K562 (cell line): ENCODE measurements at regions of chr16 and their contacts with region 1.

Region 1: GRCh38 chr16:4882633-4883285 is 35.5 kb downstream of the UBN1 start:
- DNase-seq: peak in 1 of 4 experiments; percentile 53
- ATAC-seq: peak; percentile 46
- H3K4me3 ChIP-seq: no peak overlapping the region
- H3K27ac ChIP-seq: no peak overlapping the region
- H3K4me1 ChIP-seq: peaks cover 25 to 38% of the 10 kb centered on the region in 2 experiments; a peak in 4 of 5 replicates
- H3K27me3 ChIP-seq: no peaks in the 10 kb centered on the region
- CTCF ChIP-seq: no peak
- EP300 ChIP-seq: no peak
- POLR2A ChIP-seq: no peak
- RAD21 ChIP-seq: no peak

Region 2: GRCh38 chr16:4894276-4895150 is 11.8 kb after region 1 on chr16:
- CTCF ChIA-PET with region 1: no interaction called
- POLR2A ChIA-PET with region 1: interaction called, 19 read pairs
- in situ Hi-C with region 1: no loop called
- intact Hi-C with region 1: no loop called
- DNase-seq: peak; percentile 24 to 74 (median 68)
- ATAC-seq: peak; percentile 70
- H3K4me3 ChIP-seq: no peak overlapping the region
- H3K27ac ChIP-seq: no peak overlapping the region
- H3K4me1 ChIP-seq: peaks cover 0 to 53% of the 10 kb centered on the region in 2 experiments; a peak in 2 of 5 replicates
- H3K27me3 ChIP-seq: peaks cover 16 to 38% of the 10 kb centered on the region in 2 experiments; a peak in 3 of 5 replicates
- CTCF ChIP-seq: no peak
- EP300 ChIP-seq: no peak
- POLR2A ChIP-seq: no peak
- RAD21 ChIP-seq: no peak

Region 3: DNA sequence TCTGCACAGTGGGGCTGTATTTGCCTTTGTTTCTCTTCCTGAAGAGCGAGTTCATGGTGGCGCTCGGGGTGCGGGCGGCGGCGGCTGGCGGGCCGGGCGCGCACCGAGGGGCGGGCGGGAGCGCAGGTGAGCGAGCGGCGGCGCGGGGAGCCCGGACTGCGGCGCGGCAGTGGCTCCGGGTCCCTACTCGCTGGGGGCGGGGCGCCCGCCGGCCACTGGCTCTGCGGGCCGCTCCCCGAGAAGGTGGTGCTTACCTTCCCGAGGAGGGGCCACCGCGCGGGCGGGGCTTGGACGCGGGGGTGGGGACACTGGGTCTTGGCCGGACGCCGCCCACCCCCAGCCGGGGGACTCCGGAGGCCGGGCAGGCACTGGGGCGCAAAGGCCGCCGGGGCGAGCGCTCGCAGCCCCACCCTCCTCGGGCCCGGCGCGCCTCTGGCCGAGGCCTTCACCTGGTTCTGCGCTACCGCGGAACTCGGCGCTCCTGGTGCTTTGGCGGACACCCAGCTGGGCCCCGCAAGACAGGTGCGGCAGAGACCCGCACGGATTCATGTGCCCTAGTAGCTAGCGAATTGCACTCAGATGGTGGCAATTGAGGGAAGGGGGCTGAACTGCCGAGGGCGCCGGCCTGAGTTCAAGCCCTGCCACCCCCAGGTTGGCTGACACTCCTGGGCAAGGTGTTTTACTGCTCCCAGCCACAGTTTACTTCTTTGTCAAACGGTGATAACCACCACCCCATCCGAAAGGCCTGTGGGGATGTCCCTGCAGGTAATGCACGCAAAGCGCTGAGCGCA is 54.4 kb after region 1 on chr16 and contains the start of gene PPL:
- CTCF ChIA-PET with region 1: no interaction called
- POLR2A ChIA-PET with region 1: no interaction called
- in situ Hi-C with region 1: no loop called
- intact Hi-C with region 1: loop called (anchors 10 kb)
- DNase-seq: peak; percentile 84 to 98 (median 93)
- ATAC-seq: peak; percentile 91
- H3K4me3 ChIP-seq: peak within 1 kb of the TSS; percentile 40
- H3K27ac ChIP-seq: no peak within 1 kb of the TSS
- H3K4me1 ChIP-seq: peaks cover 0 to 18% of the 10 kb centered on the region in 2 experiments; a peak in 3 of 5 replicates
- H3K27me3 ChIP-seq: peaks cover 28 to 61% of the 10 kb centered on the region in 2 experiments
- CTCF ChIP-seq: no peak
- EP300 ChIP-seq: no peak
- POLR2A ChIP-seq: no peak
- RAD21 ChIP-seq: no peak
- polyA plus RNA-seq, gene PPL: 0.15 TPM in 1 of 2 experiments, not detected in the other